ENCODE measurements at regions of chr9 and their contacts with region 1.

Region 1: GRCh38 chr9:130053504-130054324 is at the start of gene GPR107:
- DNase-seq: peak in 2 of 3 donors; percentile 57 to 77
- H3K4me3 ChIP-seq: peak within 1 kb of the TSS; percentile 87 to 98 (median 94)
- H3K27ac ChIP-seq: peak within 1 kb of the TSS; percentile 85 to 95
- H3K4me1 ChIP-seq: peaks cover 7 to 46% (median 35%) of the 10 kb centered on the region in 4 experiments
- H3K27me3 ChIP-seq: no peaks in the 10 kb centered on the region

Region 2: GRCh38 chr9:130042833-130043653 is 10.7 kb before region 1 on chr9 and contains the start of gene FNBP1:
- CTCF ChIA-PET with region 1: interaction called, 12 read pairs
- POLR2A ChIA-PET with region 1: interaction called, 17 read pairs
- DNase-seq: peak; percentile 66 to 91 (median 88)
- H3K4me3 ChIP-seq: peak within 1 kb of the TSS; percentile 76 to 99 (median 94)
- H3K27ac ChIP-seq: peak within 1 kb of the TSS; percentile 89 to 95
- H3K4me1 ChIP-seq: peaks cover 37 to 74% (median 65%) of the 10 kb centered on the region in 4 experiments
- H3K27me3 ChIP-seq: no peaks in the 10 kb centered on the region

Region 3: GRCh38 chr9:130069048-130069447 is 15.3 kb after region 1 on chr9:
- CTCF ChIA-PET with region 1: interaction called, 29 read pairs
- POLR2A ChIA-PET with region 1: interaction called, 5 read pairs
- DNase-seq: peak in 1 of 3 donors; percentile 30
- H3K4me3 ChIP-seq: peak overlapping the region in 1 of 7 experiments; percentile 62
- H3K27ac ChIP-seq: peak overlapping the region in 1 of 2 experiments; percentile 86
- H3K4me1 ChIP-seq: peaks cover 15 to 51% (median 36%) of the 10 kb centered on the region in 4 experiments
- H3K27me3 ChIP-seq: no peaks in the 10 kb centered on the region

Region 4: DNA sequence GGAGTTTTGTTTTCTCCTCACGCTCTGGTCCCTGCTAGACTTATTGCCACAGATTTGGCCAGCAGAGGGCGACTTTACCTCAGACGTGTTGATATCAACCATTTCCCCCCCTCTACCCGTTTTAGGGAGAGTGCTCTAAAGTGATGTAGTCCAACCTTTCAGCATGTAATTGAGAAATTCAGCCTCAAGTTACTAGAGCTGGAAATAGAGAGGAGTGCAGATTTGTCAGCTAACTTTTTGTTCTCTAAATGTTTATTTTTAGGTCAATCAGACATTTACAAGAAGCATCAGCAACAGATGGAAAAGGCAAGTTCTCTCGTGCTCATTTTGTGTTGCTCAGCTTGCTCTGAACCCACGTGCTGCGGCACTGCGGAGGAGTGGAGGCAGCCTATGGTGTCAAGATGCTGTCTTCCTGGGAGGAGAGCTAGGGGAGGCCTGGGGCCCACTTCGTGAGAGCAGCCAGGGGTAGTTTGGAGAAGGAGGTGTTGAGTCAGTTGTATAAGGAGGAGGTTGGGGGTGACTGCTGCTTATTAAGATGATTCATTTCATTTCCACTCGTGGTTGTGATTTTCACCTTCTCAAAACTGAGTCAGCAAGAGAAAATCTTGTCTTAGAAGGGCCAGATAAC is 53.6 kb after region 1 on chr9:
- CTCF ChIA-PET with region 1: no interaction called
- POLR2A ChIA-PET with region 1: no interaction called
- DNase-seq: peak; percentile 81 to 89 (median 83)
- H3K4me3 ChIP-seq: no peak overlapping the region
- H3K27ac ChIP-seq: no peak overlapping the region
- H3K4me1 ChIP-seq: peaks cover 2 to 11% (median 5%) of the 10 kb centered on the region in 4 experiments
- H3K27me3 ChIP-seq: no peaks in the 10 kb centered on the region

Region 5: GRCh38 chr9:130128733-130129431 is 75.2 kb after region 1 on chr9:
- CTCF ChIA-PET with region 1: no interaction called
- POLR2A ChIA-PET with region 1: no interaction called
- DNase-seq: peak; percentile 47 to 87 (median 83)
- H3K4me3 ChIP-seq: peak overlapping the region in 3 of 7 experiments; percentile 38 to 49 (median 41)
- H3K27ac ChIP-seq: peak overlapping the region in 1 of 2 experiments; percentile 50
- H3K4me1 ChIP-seq: peaks cover 11 to 39% (median 25%) of the 10 kb centered on the region in 4 experiments
- H3K27me3 ChIP-seq: no peaks in the 10 kb centered on the region